Breast epithelium (tissue), 4 donors: ENCODE measurements at regions of chr5 and their contacts with region 1.

Region 1: GRCh38 chr5:117249080-117249815 is 674.6 kb upstream of the SEMA6A start:
- DNase-seq: no peak
- H3K4me3 ChIP-seq: no peak overlapping the region
- H3K27ac ChIP-seq: no peak overlapping the region
- H3K4me1 ChIP-seq: no peaks in the 10 kb centered on the region
- H3K27me3 ChIP-seq: no peaks in the 10 kb centered on the region
- CTCF ChIP-seq: no peak
- POLR2A ChIP-seq: no peak

Region 2: DNA sequence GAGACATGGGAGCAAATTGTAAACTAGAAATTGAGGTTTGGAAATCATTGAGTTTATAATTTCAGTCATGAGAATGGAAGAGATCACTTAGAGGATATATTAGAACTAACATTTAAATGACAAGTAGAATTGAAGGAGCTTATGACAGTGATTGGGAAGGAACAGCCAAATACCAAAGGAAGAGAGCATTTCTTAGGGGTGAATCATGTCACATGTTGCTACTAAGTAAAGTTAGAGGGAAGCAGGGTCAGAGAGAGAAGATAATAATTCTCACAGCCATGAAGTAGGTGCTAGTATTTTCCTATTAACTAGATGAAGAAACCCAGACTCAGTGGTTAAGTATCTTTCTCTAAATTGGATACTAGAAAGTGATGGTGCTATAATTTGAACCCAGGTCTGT is 1105.1 kb before region 1 on chr5:
- intact Hi-C with region 1: no loop called
- DNase-seq: no peak
- H3K4me3 ChIP-seq: no peak overlapping the region
- H3K27ac ChIP-seq: no peak overlapping the region
- H3K4me1 ChIP-seq: no peaks in the 10 kb centered on the region
- H3K27me3 ChIP-seq: no peaks in the 10 kb centered on the region
- CTCF ChIP-seq: no peak
- POLR2A ChIP-seq: no peak

Region 3: DNA sequence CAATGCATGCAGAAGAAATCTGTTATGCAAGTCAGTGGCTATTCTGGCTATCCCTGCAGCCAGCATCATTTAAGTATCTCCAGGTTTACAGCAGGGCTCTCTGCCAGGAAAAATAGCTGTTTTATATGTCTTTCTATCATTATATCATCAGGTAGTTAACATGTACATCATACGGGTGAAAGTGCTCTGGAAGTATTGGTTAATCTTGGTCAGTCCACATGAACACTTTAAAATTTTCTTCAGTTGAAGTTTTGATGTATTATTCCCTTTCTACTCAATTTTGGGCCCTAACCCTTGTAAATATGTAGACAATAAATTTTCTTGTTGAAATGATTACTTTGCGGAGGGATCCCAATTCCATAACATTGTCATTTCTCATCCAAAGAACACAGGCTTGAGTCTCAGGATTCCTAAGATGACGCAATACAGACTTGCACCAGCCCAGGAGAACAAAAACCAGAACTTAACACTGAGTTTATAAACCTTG is 742.2 kb before region 1 on chr5:
- intact Hi-C with region 1: no loop called
- DNase-seq: no peak
- H3K4me3 ChIP-seq: no peak overlapping the region
- H3K27ac ChIP-seq: no peak overlapping the region
- H3K4me1 ChIP-seq: no peaks in the 10 kb centered on the region
- H3K27me3 ChIP-seq: no peaks in the 10 kb centered on the region
- CTCF ChIP-seq: no peak
- POLR2A ChIP-seq: no peak

Region 4: GRCh38 chr5:116593340-116593739 is 655.9 kb before region 1 on chr5:
- intact Hi-C with region 1: loop called (anchors 5 kb)
- DNase-seq: no peak
- H3K4me3 ChIP-seq: no peak overlapping the region
- H3K27ac ChIP-seq: no peak overlapping the region
- H3K4me1 ChIP-seq: no peaks in the 10 kb centered on the region
- H3K27me3 ChIP-seq: no peaks in the 10 kb centered on the region
- CTCF ChIP-seq: no peak
- POLR2A ChIP-seq: no peak